Heart left ventricle (tissue), 16 donors: ENCODE measurements at regions of chr6 and their contacts with region 1.

Region 1: GRCh38 chr6:53565886-53566285 is 21.0 kb upstream of the GCLC start:
- DNase-seq: no peak
- ATAC-seq: no peak
- H3K4me3 ChIP-seq: no peak overlapping the region
- H3K27ac ChIP-seq: no peak overlapping the region
- H3K4me1 ChIP-seq: no peaks in the 10 kb centered on the region
- H3K27me3 ChIP-seq: no peaks in the 10 kb centered on the region
- CTCF ChIP-seq: no peak
- POLR2A ChIP-seq: no peak

Region 2: GRCh38 chr6:53603386-53604116 is 37.7 kb after region 1 on chr6:
- intact Hi-C with region 1: loop called in 1 of 10 experiments (anchors 5 kb)
- DNase-seq: no peak
- ATAC-seq: no peak
- H3K4me3 ChIP-seq: no peak overlapping the region
- H3K27ac ChIP-seq: no peak overlapping the region
- H3K4me1 ChIP-seq: peaks cover 0 to 5% (median 0%) of the 10 kb centered on the region in 12 donors
- H3K27me3 ChIP-seq: no peaks in the 10 kb centered on the region
- CTCF ChIP-seq: no peak
- POLR2A ChIP-seq: no peak